ENCODE measurements at regions of chr11 and their contacts with region 1.

Region 1: GRCh38 chr11:8263769-8264410 is at the start of gene LMO1:
- DNase-seq: peak; percentile 72
- ATAC-seq: peak; percentile 75
- H3K4me3 Mint-ChIP-seq: peak within 1 kb of the TSS; percentile 80
- H3K27ac Mint-ChIP-seq: no peak within 1 kb of the TSS
- H3K4me1 Mint-ChIP-seq: peaks cover 10% of the 10 kb centered on the region
- H3K27me3 Mint-ChIP-seq: peaks cover 61% of the 10 kb centered on the region
- CTCF ChIP-seq: no peak
- total RNA-seq, gene LMO1: not detected in 2 replicates

Region 2: GRCh38 chr11:8192016-8192895 is 71.6 kb before region 1 on chr11:
- CTCF ChIA-PET with region 1: interaction called, 70 read pairs
- POLR2A ChIA-PET with region 1: interaction called, 5 read pairs
- intact Hi-C with region 1: loop called (anchors 1 kb)
- DNase-seq: peak; percentile 37
- ATAC-seq: peak; percentile 85
- H3K4me3 Mint-ChIP-seq: no peak overlapping the region
- H3K27ac Mint-ChIP-seq: no peak overlapping the region
- H3K4me1 Mint-ChIP-seq: peaks cover 8% of the 10 kb centered on the region
- H3K27me3 Mint-ChIP-seq: peaks cover 4% of the 10 kb centered on the region
- CTCF ChIP-seq: peak; percentile 42

Region 3: GRCh38 chr11:8209208-8209807 is 54.6 kb before region 1 on chr11:
- CTCF ChIA-PET with region 1: interaction called, 5 read pairs
- POLR2A ChIA-PET with region 1: no interaction called
- intact Hi-C with region 1: loop called (anchors 5 kb)
- DNase-seq: peak; percentile 65
- ATAC-seq: peak; percentile 55
- H3K4me3 Mint-ChIP-seq: no peak overlapping the region
- H3K27ac Mint-ChIP-seq: peak overlapping the region; percentile 46
- H3K4me1 Mint-ChIP-seq: peaks cover 36% of the 10 kb centered on the region
- H3K27me3 Mint-ChIP-seq: no peaks in the 10 kb centered on the region
- CTCF ChIP-seq: peak; percentile 81

Region 4: DNA sequence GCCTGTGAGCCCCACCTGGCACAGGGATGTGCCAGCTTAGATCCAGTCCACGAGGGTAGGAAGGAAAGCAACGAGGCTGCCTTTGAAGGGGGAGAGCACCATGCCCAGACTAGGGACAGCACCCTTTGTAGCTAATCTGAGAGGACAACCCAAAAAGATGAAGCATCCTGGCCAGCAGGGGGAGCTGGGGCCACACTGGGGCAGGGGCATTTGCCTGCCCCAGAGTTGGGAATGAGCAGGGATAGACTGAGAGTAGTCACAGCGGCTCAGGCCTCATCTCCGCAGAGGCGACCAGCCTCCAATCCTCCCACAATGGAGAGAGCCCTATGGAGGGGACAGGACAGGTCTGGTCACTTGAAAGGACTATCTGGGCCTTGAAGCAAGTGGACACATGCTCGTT is 16.6 kb before region 1 on chr11:
- CTCF ChIA-PET with region 1: interaction called, 15 read pairs
- POLR2A ChIA-PET with region 1: no interaction called
- intact Hi-C with region 1: loop called (anchors 1 kb)
- DNase-seq: no peak
- ATAC-seq: peak; percentile 21
- H3K4me3 Mint-ChIP-seq: no peak overlapping the region
- H3K27ac Mint-ChIP-seq: no peak overlapping the region
- H3K4me1 Mint-ChIP-seq: no peaks in the 10 kb centered on the region
- H3K27me3 Mint-ChIP-seq: peaks cover 17% of the 10 kb centered on the region
- CTCF ChIP-seq: no peak

Region 5: GRCh38 chr11:8277691-8278090 is 13.8 kb after region 1 on chr11:
- CTCF ChIA-PET with region 1: interaction called, 10 read pairs
- POLR2A ChIA-PET with region 1: no interaction called
- intact Hi-C with region 1: no loop called
- DNase-seq: no peak
- ATAC-seq: no peak
- H3K4me3 Mint-ChIP-seq: no peak overlapping the region
- H3K27ac Mint-ChIP-seq: no peak overlapping the region
- H3K4me1 Mint-ChIP-seq: peaks cover 3% of the 10 kb centered on the region
- H3K27me3 Mint-ChIP-seq: peaks cover 8% of the 10 kb centered on the region
- CTCF ChIP-seq: no peak